ENCODE measurements at regions of chr19 and their contacts with region 1.

Region 1: GRCh38 chr19:12881172-12881808 is at the start of gene DNASE2:
- DNase-seq: peak; percentile 80 to 91 (median 84)
- H3K4me3 ChIP-seq: peak within 1 kb of the TSS; percentile 73 to 76
- H3K4me3 Mint-ChIP-seq: peak within 1 kb of the TSS; percentile 88 to 92 (median 89)
- H3K27ac ChIP-seq: peak within 1 kb of the TSS; percentile 66
- H3K27ac Mint-ChIP-seq: peak within 1 kb of the TSS; percentile 85 to 96 (median 93)
- H3K4me1 ChIP-seq: peaks cover 29% of the 10 kb centered on the region
- H3K4me1 Mint-ChIP-seq: peaks cover 10 to 46% (median 23%) of the 10 kb centered on the region in 4 donors
- H3K27me3 ChIP-seq: no peaks in the 10 kb centered on the region
- H3K27me3 Mint-ChIP-seq: no peaks in the 10 kb centered on the region
- total RNA-seq, gene DNASE2: 31.6 to 32.8 TPM

Region 2: DNA sequence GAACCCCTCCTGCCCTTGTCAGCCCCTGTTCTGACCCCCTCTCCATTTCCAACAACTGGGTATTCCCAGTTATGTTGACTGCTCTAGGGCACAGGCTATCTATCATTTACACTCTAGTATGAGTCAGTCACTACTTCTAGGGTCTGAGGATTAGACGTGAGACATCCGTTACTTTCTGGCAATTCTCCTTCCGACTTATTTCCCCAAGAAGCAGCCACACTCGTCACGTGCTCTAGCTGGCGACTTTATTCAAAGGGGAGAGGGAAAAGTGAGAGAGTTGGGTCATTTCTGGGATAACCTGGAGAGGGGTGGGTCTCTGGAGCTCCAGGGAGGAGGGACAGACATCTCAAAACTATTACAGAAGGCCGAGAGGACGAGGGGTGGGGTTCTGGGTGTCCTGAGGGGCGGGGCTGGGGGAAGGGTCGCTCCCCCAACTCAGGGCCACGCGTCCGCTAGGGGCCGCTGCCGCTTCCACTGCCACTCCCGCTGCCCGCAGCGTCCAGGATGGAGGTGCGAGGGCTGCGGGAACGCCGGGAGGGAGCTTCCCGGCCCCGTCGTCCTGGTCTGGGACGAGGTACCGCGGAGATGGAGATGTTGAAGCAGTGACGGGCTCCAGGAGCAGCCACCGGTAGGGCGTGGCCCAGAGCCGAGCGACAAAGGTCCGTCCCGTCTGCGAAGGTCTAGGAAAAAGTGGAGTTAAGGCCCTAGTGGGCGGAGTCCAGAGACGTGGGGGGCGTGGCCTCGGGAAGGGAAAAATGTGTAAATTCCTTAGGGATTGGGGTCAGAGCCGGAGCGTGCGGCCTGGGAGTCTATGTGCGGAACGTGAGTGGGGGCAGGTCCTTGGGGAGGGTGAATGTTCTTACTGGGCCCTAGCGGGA is 55.8 kb before region 1 on chr19:
- CTCF ChIA-PET with region 1: no interaction called
- POLR2A ChIA-PET with region 1: no interaction called
- intact Hi-C with region 1: no loop called
- DNase-seq: no peak
- H3K4me3 ChIP-seq: no peak overlapping the region
- H3K4me3 Mint-ChIP-seq: peak overlapping the region in 1 of 8 donors; percentile 66
- H3K27ac ChIP-seq: no peak overlapping the region
- H3K27ac Mint-ChIP-seq: peak overlapping the region in 1 of 7 donors; percentile 26
- H3K4me1 ChIP-seq: peaks cover 8% of the 10 kb centered on the region
- H3K4me1 Mint-ChIP-seq: peaks cover 3 to 11% (median 5%) of the 10 kb centered on the region in 4 donors
- H3K27me3 ChIP-seq: peaks cover 32% of the 10 kb centered on the region
- H3K27me3 Mint-ChIP-seq: peaks cover 33 to 41% of the 10 kb centered on the region in 2 donors

Region 3: GRCh38 chr19:12899891-12900518 is 18.7 kb after region 1 on chr19:
- CTCF ChIA-PET with region 1: interaction called, 11 read pairs
- POLR2A ChIA-PET with region 1: interaction called, 4 read pairs
- intact Hi-C with region 1: no loop called
- DNase-seq: no peak
- H3K4me3 ChIP-seq: no peak overlapping the region
- H3K4me3 Mint-ChIP-seq: no peak overlapping the region
- H3K27ac ChIP-seq: no peak overlapping the region
- H3K27ac Mint-ChIP-seq: peak overlapping the region in 2 of 7 donors; percentile 10 to 29
- H3K4me1 ChIP-seq: no peaks in the 10 kb centered on the region
- H3K4me1 Mint-ChIP-seq: no peaks in the 10 kb centered on the region
- H3K27me3 ChIP-seq: no peaks in the 10 kb centered on the region
- H3K27me3 Mint-ChIP-seq: no peaks in the 10 kb centered on the region

Region 4: DNA sequence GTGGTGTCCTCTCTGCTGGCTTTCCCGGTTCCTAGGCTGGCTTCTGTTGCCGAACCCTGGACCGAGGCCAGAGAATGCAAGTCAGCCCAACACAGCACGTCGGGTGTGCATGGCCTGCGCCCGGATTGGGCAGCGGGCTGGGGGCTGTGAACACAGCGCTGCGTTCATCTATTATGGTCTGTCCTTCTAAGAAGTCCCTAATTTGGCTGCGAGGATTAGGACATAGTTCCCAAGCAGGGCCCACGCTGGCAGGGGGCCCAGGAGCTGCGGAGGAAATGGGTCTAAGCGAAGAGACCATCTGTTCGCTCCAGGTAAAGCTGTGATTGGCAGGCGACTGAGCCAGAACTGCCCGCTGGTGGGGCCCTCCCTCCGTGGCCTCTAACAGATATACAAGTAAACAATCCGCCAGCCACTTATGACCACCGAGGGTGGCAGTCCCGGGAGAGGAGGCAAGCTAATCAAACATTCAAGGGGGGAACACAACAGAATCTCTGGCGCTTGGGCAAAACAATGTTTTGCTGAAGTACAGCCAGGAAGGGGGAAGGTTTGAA is 31.8 kb after region 1 on chr19:
- CTCF ChIA-PET with region 1: interaction called, 29 read pairs
- POLR2A ChIA-PET with region 1: interaction called, 6 read pairs
- intact Hi-C with region 1: loop called (anchors 5 kb)
- DNase-seq: no peak
- H3K4me3 ChIP-seq: no peak overlapping the region
- H3K4me3 Mint-ChIP-seq: peak overlapping the region in 2 of 8 donors; percentile 5 to 31
- H3K27ac ChIP-seq: no peak overlapping the region
- H3K27ac Mint-ChIP-seq: peak overlapping the region in 5 of 7 donors; percentile 3 to 98 (median 88)
- H3K4me1 ChIP-seq: peaks cover 21% of the 10 kb centered on the region
- H3K4me1 Mint-ChIP-seq: peaks cover 9 to 29% (median 18%) of the 10 kb centered on the region in 4 donors
- H3K27me3 ChIP-seq: no peaks in the 10 kb centered on the region
- H3K27me3 Mint-ChIP-seq: no peaks in the 10 kb centered on the region

Region 5: GRCh38 chr19:12918271-12918670 is 37.0 kb after region 1 on chr19:
- CTCF ChIA-PET with region 1: interaction called, 29 read pairs
- POLR2A ChIA-PET with region 1: interaction called, 13 read pairs
- intact Hi-C with region 1: loop called (anchors 5 kb)
- DNase-seq: no peak
- H3K4me3 ChIP-seq: no peak overlapping the region
- H3K4me3 Mint-ChIP-seq: peak overlapping the region in 3 of 8 donors; percentile 33 to 70 (median 59)
- H3K27ac ChIP-seq: no peak overlapping the region
- H3K27ac Mint-ChIP-seq: peak overlapping the region in 3 of 7 donors; percentile 69 to 93 (median 70)
- H3K4me1 ChIP-seq: peaks cover 28% of the 10 kb centered on the region
- H3K4me1 Mint-ChIP-seq: peaks cover 13 to 40% (median 25%) of the 10 kb centered on the region in 4 donors
- H3K27me3 ChIP-seq: no peaks in the 10 kb centered on the region
- H3K27me3 Mint-ChIP-seq: no peaks in the 10 kb centered on the region

Region 6: GRCh38 chr19:13033819-13034611 is 152.7 kb after region 1 on chr19:
- CTCF ChIA-PET with region 1: no interaction called
- POLR2A ChIA-PET with region 1: no interaction called
- intact Hi-C with region 1: no loop called
- DNase-seq: peak in 1 of 5 donors; percentile 25
- H3K4me3 ChIP-seq: no peak overlapping the region
- H3K4me3 Mint-ChIP-seq: no peak overlapping the region
- H3K27ac ChIP-seq: no peak overlapping the region
- H3K27ac Mint-ChIP-seq: no peak overlapping the region
- H3K4me1 ChIP-seq: no peaks in the 10 kb centered on the region
- H3K4me1 Mint-ChIP-seq: peaks cover 0 to 1% (median 0%) of the 10 kb centered on the region in 4 donors
- H3K27me3 ChIP-seq: no peaks in the 10 kb centered on the region
- H3K27me3 Mint-ChIP-seq: peaks cover 0 to 9% of the 10 kb centered on the region in 2 donors

Region 7: GRCh38 chr19:13099073-13099999 is 218.0 kb after region 1 on chr19:
- CTCF ChIA-PET with region 1: no interaction called
- POLR2A ChIA-PET with region 1: interaction called, 5 read pairs
- intact Hi-C with region 1: loop called (anchors 5 kb)
- DNase-seq: peak; percentile 82 to 88 (median 84)
- H3K4me3 ChIP-seq: peak overlapping the region; percentile 58 to 70
- H3K4me3 Mint-ChIP-seq: peak overlapping the region; percentile 84 to 92 (median 87)
- H3K27ac ChIP-seq: peak overlapping the region; percentile 78
- H3K27ac Mint-ChIP-seq: peak overlapping the region; percentile 84 to 99 (median 97)
- H3K4me1 ChIP-seq: peaks cover 87% of the 10 kb centered on the region
- H3K4me1 Mint-ChIP-seq: peaks cover 29 to 81% (median 48%) of the 10 kb centered on the region in 4 donors
- H3K27me3 ChIP-seq: peaks cover 15% of the 10 kb centered on the region
- H3K27me3 Mint-ChIP-seq: peaks cover 5 to 10% of the 10 kb centered on the region in 2 donors